KBM-7 (cell line): ENCODE measurements at regions of chr11 and their contacts with region 1.

Region 1: DNA sequence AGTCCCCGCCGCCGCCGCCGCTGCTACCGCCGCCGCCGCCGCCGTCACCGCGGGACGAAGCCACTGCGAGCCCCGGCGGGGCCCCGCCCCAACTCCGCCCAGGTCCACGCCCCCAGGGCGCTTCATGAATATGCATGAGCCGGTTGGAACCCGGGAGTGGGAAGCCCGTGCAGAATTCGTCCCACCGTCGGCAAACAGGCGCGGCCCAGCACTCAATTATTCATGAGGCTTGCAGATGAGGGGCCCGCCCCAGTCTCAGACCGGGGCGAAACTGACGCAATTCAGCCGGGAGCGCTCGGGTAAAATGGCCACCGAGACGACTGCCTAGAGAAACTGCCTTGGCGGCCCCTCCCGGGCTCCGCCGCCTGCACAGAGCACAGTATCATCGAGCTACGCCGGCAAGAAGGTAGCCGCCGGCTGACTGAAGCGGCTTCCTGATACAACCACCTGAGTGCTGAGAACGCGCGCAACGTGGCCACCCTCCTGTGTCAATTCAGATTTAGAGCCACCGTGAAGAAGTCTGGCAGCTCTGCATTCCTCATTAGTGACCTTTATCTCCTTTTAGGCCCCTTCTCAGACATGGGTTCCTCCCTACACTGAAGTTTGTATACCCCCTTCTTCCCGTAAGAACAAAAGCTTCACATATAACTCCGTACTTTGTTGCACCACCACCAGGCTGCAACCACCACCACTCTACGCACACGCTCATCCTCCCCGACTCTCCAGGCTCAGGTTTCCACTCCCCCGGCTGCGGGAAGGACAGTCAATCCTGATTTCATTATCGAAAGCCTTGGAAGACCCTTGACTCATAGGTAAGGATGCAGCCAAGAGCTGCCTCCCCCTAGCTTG is at the start of gene TNKS1BP1:
- DNase-seq: peak; percentile 94

Region 2: DNA sequence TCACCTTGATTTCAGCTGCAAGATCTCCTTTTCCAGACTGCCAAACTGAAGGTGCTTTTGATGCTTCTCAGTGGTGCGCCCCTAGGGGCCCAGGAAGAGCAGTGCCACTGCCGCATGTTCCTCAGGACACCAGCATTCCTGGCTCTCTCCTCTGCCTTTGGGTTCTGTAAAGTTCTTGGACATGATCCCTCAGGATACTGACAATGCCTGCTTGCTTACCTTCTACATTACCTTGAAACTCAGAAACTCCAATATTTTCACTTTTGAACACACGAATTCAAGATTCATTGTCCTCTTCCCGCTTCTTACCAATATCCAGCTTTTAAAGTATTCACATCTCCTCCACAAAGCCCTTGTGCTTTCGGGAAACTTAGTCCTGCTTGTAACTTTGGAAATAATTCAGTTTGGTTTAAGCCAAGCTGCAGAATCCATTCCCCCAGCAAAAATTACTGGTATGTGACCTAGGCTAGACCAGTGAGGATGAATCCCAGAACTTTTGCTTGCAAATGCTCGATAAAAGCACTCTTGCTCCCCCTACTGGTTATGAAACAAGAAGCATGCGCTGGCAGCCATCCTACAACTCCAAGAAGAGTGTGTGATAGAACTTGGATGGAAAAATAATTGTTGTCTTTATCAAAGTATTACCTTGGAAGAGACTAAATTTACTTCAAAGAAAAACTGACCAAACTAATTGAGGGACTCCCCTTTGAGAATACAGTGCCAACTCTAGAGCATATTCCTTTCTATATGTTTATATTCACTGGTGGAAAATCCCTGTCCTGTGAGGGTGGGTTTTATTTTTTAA is 1199.3 kb after region 1 on chr11:
- in situ Hi-C with region 1: loop called (anchors 25 kb)
- DNase-seq: peak; percentile 83